Cardiac septum (tissue), 1 donor: ENCODE measurements at regions of chr11 and their contacts with region 1.

Region 1: GRCh38 chr11:124673333-124674167 is at the starts of genes SIAE and SPA17:
- DNase-seq: peak; percentile 96
- total RNA-seq, gene SIAE: 42.5 TPM
- total RNA-seq, gene SPA17: 1.8 TPM

Region 2: DNA sequence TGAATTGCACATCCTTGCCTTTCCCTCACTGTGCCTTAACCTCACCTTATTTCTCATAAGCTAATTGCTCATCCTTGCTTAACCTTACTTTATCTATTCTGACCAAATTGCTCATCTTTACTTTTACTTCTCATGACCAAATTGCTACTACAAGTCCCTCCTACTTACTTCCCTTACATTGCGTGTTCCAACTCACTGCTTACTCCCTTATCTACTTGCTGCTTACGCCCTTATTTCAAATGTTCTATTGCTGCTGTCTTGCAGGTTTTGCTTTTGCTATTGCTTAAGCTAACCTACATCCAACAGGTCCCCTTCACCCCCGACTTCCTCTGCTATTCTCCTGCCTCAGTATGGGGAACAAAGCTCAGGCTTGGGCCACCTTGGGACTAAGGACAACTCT is 297.3 kb before region 1 on chr11:
- intact Hi-C with region 1: no loop called
- DNase-seq: no peak

Region 3: DNA sequence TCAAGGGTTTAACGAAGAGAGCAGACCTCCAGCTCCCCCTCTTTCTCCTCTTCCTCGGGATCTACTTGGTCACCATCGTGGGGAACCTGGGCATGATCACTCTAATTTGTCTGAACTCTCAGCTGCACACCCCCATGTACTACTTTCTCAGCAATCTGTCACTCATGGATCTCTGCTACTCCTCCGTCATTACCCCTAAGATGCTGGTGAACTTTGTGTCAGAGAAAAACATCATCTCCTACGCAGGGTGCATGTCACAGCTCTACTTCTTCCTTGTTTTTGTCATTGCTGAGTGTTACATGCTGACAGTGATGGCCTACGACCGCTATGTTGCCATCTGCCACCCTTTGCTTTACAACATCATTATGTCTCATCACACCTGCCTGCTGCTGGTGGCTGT is 103.4 kb before region 1 on chr11:
- intact Hi-C with region 1: no loop called
- DNase-seq: no peak

Region 4: GRCh38 chr11:124724979-124725718 is 51.6 kb after region 1 on chr11:
- intact Hi-C with region 1: loop called (anchors 5 kb)
- DNase-seq: no peak

Region 5: GRCh38 chr11:124739479-124740276 is 66.1 kb after region 1 on chr11 and contains the start of gene NRGN:
- intact Hi-C with region 1: loop called (anchors 5 kb)
- DNase-seq: peak; percentile 93
- total RNA-seq, gene NRGN: 6.4 TPM

Region 6: DNA sequence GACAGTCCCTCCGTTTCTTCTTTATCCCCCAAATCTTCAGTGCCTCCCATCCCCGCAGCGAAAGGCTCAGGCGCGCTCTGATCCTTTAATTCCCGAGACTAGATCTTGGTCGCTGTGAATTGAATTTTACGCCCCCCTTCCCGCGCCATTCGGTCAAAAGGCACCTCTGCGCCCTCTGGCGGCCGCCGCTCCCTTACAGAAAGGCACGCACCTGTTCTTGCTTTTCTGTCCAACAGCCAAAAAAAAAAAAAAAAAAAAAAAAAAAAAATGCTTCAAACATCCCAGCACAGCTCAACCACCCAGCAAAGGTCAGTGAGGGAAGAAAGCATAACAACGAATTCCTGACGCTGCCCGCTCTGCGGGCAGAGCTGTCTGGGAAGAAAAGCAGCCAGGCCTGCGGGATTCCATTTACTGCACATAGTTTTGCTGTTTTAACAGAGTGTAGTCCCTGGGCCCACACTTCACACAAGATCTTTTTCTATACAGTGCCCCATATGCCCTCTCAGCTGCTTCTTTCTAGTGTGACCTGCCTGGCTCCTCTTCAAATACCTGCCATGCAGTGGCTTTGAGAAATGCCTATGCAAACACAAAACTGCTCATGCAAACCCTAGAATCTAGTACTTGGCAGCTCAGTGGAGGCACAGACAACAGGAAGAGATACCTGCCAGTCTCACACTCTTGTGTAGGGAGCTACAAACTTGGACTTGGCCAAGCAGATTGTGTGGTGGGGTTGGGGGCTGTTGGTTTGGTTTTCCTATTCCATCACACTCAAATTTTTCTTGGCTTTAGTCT is 89.8 kb after region 1 on chr11:
- intact Hi-C with region 1: loop called (anchors 1 kb)
- DNase-seq: peak; percentile 89

Region 7: GRCh38 chr11:124800226-124800929 is 126.8 kb after region 1 on chr11 and contains the start of gene MSANTD2:
- intact Hi-C with region 1: loop called (anchors 1 kb)
- DNase-seq: peak; percentile 93
- total RNA-seq, gene MSANTD2: 5.3 TPM

Region 8: GRCh38 chr11:124837491-124837856 is 163.9 kb after region 1 on chr11:
- intact Hi-C with region 1: loop called (anchors 1 kb)
- DNase-seq: no peak

Region 9: GRCh38 chr11:124953753-124954589 is 280.4 kb after region 1 on chr11 and contains the start of gene CCDC15:
- intact Hi-C with region 1: loop called (anchors 10 kb)
- DNase-seq: peak; percentile 99
- total RNA-seq, gene CCDC15: 0.24 TPM